MCF 10A (cell line): ENCODE measurements at regions of chr1 and their contacts with region 1.

Region 1: GRCh38 chr1:174262349-174263241 is 103.3 kb downstream of the RABGAP1L start:
- DNase-seq: peak; percentile 59
- H3K4me3 Mint-ChIP-seq: no peak overlapping the region
- H3K27ac Mint-ChIP-seq: no peak overlapping the region
- H3K4me1 Mint-ChIP-seq: no peaks in the 10 kb centered on the region
- H3K27me3 Mint-ChIP-seq: no peaks in the 10 kb centered on the region
- CTCF ChIP-seq: peak; percentile 90

Region 2: GRCh38 chr1:174217787-174218574 is 44.6 kb before region 1 on chr1:
- CTCF ChIA-PET with region 1: interaction called, 10 read pairs
- POLR2A ChIA-PET with region 1: no interaction called
- intact Hi-C with region 1: no loop called
- DNase-seq: peak; percentile 61
- H3K4me3 Mint-ChIP-seq: no peak overlapping the region
- H3K27ac Mint-ChIP-seq: no peak overlapping the region
- H3K4me1 Mint-ChIP-seq: peaks cover 6% of the 10 kb centered on the region
- H3K27me3 Mint-ChIP-seq: no peaks in the 10 kb centered on the region
- CTCF ChIP-seq: peak; percentile 90

Region 3: GRCh38 chr1:174276087-174276486 is 13.5 kb after region 1 on chr1:
- CTCF ChIA-PET with region 1: interaction called, 51 read pairs
- POLR2A ChIA-PET with region 1: interaction called, 3 read pairs
- intact Hi-C with region 1: no loop called
- DNase-seq: no peak
- H3K4me3 Mint-ChIP-seq: no peak overlapping the region
- H3K27ac Mint-ChIP-seq: no peak overlapping the region
- H3K4me1 Mint-ChIP-seq: no peaks in the 10 kb centered on the region
- H3K27me3 Mint-ChIP-seq: no peaks in the 10 kb centered on the region
- CTCF ChIP-seq: no peak

Region 4: GRCh38 chr1:174469687-174470086 is 207.1 kb after region 1 on chr1:
- CTCF ChIA-PET with region 1: interaction called, 7 read pairs
- POLR2A ChIA-PET with region 1: no interaction called
- intact Hi-C with region 1: loop called (anchors 10 kb)
- DNase-seq: no peak
- H3K4me3 Mint-ChIP-seq: no peak overlapping the region
- H3K27ac Mint-ChIP-seq: no peak overlapping the region
- H3K4me1 Mint-ChIP-seq: no peaks in the 10 kb centered on the region
- H3K27me3 Mint-ChIP-seq: no peaks in the 10 kb centered on the region
- CTCF ChIP-seq: no peak

Region 5: DNA sequence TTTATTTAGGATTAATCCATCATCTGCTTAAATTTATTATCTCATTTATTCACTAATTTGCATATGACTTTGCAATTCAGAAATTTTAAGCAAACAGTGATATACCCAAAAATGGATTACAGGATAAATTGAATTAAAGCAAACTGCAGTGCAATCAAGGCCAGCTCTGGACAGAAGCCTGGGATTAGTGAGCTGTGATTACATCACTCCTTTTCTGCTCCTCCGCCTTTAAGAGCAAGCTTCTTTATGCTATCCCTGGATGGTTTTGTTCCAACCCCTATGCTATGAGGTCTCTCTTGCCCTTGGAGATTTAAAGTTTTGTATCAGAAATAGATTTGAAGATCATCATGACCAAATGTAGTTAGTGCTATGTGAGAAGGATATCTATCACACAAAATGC is 217.7 kb after region 1 on chr1:
- CTCF ChIA-PET with region 1: no interaction called
- POLR2A ChIA-PET with region 1: no interaction called
- intact Hi-C with region 1: no loop called
- DNase-seq: no peak
- H3K4me3 Mint-ChIP-seq: no peak overlapping the region
- H3K27ac Mint-ChIP-seq: no peak overlapping the region
- H3K4me1 Mint-ChIP-seq: no peaks in the 10 kb centered on the region
- H3K27me3 Mint-ChIP-seq: no peaks in the 10 kb centered on the region
- CTCF ChIP-seq: no peak

Region 6: GRCh38 chr1:174682419-174683008 is 419.9 kb after region 1 on chr1:
- CTCF ChIA-PET with region 1: interaction called, 13 read pairs
- POLR2A ChIA-PET with region 1: no interaction called
- intact Hi-C with region 1: no loop called
- DNase-seq: no peak
- H3K4me3 Mint-ChIP-seq: no peak overlapping the region
- H3K27ac Mint-ChIP-seq: no peak overlapping the region
- H3K4me1 Mint-ChIP-seq: no peaks in the 10 kb centered on the region
- H3K27me3 Mint-ChIP-seq: no peaks in the 10 kb centered on the region
- CTCF ChIP-seq: no peak

Region 7: GRCh38 chr1:174726167-174726879 is 463.7 kb after region 1 on chr1:
- CTCF ChIA-PET with region 1: interaction called, 191 read pairs
- POLR2A ChIA-PET with region 1: interaction called, 5 read pairs
- intact Hi-C with region 1: loop called (anchors 1 kb)
- DNase-seq: peak; percentile 36
- H3K4me3 Mint-ChIP-seq: no peak overlapping the region
- H3K27ac Mint-ChIP-seq: no peak overlapping the region
- H3K4me1 Mint-ChIP-seq: no peaks in the 10 kb centered on the region
- H3K27me3 Mint-ChIP-seq: no peaks in the 10 kb centered on the region
- CTCF ChIP-seq: peak; percentile 69

Region 8: GRCh38 chr1:174753131-174753530 is 490.5 kb after region 1 on chr1:
- CTCF ChIA-PET with region 1: interaction called, 190 read pairs
- POLR2A ChIA-PET with region 1: interaction called, 3 read pairs
- intact Hi-C with region 1: no loop called
- DNase-seq: no peak
- H3K4me3 Mint-ChIP-seq: no peak overlapping the region
- H3K27ac Mint-ChIP-seq: no peak overlapping the region
- H3K4me1 Mint-ChIP-seq: no peaks in the 10 kb centered on the region
- H3K27me3 Mint-ChIP-seq: no peaks in the 10 kb centered on the region
- CTCF ChIP-seq: no peak